Activated CD4-positive, alpha-beta T cell treated with anti-CD3 and anti-CD28 coated beads for 36 hours (primary cell): ENCODE measurements at regions of chr15 and their contacts with region 1.

Region 1: DNA sequence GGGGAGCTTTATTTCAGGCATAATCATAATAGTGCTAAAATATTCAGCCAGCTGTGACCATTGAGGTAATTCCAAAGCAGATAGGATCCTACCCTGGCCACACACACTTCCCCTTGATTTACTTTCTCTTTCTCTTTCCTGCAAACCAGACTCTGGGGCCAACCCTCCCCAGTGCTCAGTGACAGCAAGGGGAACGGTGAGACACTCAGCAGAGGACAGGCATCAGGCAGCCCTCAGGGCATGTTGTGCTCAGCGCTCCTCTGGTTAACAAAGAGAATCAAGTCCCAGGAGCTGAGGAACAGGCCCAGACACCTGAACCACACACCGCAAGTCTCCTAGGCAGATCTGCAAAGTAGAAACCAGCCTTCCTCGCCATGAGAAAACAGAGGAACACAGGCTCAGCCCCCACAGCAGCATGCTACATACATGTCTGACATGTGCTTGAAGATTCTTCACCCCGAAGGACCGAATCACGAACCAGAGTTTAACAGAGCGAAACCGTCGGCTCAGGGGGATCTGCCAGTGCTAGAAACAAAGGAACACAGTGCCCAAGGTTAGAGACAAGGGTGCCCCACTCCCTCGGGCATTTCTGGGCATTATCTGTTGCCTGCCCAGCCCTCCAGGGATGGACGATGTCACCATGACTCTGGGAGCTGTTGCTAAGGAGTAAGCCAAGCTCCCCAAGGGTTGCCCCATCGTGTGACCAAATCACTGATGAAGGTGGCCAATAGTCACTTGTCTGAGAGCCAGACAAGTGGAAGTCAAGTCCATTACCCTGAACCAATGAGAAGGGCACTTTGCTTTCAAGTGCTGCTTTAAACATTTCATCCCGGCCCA is 17.5 kb downstream of the HDC start:
- DNase-seq: peak; percentile 83
- ATAC-seq: peak; percentile 99
- H3K4me3 Mint-ChIP-seq: peak overlapping the region; percentile 67
- H3K27ac Mint-ChIP-seq: peak overlapping the region; percentile 96
- H3K4me1 Mint-ChIP-seq: peaks cover 33% of the 10 kb centered on the region
- H3K27me3 Mint-ChIP-seq: no peaks in the 10 kb centered on the region

Region 2: DNA sequence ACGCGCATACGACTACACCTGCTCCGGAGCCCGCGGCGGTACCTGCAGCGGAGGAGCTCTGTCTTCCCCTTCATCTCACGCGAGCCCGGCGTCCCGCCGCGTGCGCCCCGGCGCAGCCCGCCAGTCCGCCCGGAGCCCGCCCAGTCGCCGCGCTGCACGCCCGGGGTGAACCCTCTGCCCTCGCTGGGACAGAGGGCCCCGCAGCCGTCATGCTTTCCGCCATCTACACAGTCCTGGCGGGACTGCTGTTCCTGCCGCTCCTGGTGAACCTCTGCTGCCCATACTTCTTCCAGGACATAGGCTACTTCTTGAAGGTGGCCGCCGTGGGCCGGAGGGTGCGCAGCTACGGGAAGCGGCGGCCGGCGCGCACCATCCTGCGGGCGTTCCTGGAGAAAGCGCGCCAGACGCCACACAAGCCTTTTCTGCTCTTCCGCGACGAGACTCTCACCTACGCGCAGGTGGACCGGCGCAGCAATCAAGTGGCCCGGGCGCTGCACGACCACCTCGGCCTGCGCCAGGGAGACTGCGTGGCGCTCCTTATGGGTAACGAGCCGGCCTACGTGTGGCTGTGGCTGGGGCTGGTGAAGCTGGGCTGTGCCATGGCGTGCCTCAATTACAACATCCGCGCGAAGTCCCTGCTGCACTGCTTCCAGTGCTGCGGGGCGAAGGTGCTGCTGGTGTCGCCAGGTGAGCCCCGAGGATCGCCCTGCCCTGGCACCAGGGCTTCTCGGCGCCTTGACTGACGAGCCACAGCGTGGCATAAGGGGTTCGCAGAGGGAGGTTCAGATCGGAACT is 65.6 kb before region 1 on chr15:
- CTCF ChIA-PET with region 1: interaction called, 9 read pairs
- POLR2A ChIA-PET with region 1: interaction called, 5 read pairs
- intact Hi-C with region 1: loop called in 1 of 2 experiments (anchors 5 kb)
- DNase-seq: peak; percentile 73
- ATAC-seq: peak; percentile 68
- H3K4me3 Mint-ChIP-seq: peak overlapping the region; percentile 85
- H3K27ac Mint-ChIP-seq: peak overlapping the region; percentile 88
- H3K4me1 Mint-ChIP-seq: peaks cover 21% of the 10 kb centered on the region
- H3K27me3 Mint-ChIP-seq: peaks cover 27% of the 10 kb centered on the region

Region 3: GRCh38 chr15:50210291-50211062 is 37.6 kb before region 1 on chr15:
- CTCF ChIA-PET with region 1: no interaction called
- POLR2A ChIA-PET with region 1: no interaction called
- intact Hi-C with region 1: no loop called
- DNase-seq: no peak
- ATAC-seq: no peak
- H3K4me3 Mint-ChIP-seq: no peak overlapping the region
- H3K27ac Mint-ChIP-seq: no peak overlapping the region
- H3K4me1 Mint-ChIP-seq: no peaks in the 10 kb centered on the region
- H3K27me3 Mint-ChIP-seq: peaks cover 8% of the 10 kb centered on the region

Region 4: DNA sequence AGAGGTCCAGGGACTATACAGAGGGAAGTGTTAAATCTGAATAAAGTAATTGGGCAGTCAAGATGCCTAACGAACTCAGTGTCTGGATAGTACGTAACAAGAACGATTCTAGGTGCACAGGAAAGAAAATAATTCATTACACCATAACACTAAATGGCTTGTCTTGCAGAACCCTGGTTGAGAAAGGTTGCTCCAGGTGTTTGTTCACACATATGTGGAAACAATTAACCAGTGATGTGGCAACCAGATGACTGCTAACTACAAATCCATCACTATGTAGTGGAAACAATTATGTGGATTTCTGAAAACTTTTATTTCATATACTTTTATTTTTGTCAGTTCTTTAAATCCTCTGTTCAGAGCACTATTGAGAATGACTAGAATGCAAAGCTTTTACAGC is 27.9 kb after region 1 on chr15:
- CTCF ChIA-PET with region 1: no interaction called
- POLR2A ChIA-PET with region 1: no interaction called
- intact Hi-C with region 1: loop called in 1 of 2 experiments (anchors 2 kb)
- DNase-seq: no peak
- ATAC-seq: peak; percentile 65
- H3K4me3 Mint-ChIP-seq: no peak overlapping the region
- H3K27ac Mint-ChIP-seq: peak overlapping the region; percentile 41
- H3K4me1 Mint-ChIP-seq: peaks cover 23% of the 10 kb centered on the region
- H3K27me3 Mint-ChIP-seq: no peaks in the 10 kb centered on the region

Region 5: DNA sequence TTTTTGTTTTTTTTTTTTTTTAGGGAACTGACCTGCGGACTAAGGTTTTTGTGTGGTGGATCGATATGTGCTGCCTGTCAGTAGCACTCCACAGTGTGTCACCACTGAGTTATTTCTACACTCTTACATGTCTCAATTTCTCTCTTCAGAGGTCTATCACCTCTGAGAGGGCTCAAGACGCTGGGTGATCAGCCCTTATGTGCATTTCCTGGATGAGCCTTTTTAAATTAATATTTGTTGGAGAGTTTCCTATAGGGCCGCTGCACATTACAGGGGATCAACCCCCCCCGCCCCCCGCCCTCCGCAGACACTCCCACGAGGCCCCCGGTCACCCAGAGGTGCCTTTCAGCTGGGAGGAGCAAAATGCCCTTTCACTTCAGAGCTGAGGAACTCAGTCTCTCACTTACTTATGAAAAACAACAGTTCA is 625.9 kb after region 1 on chr15:
- CTCF ChIA-PET with region 1: no interaction called
- POLR2A ChIA-PET with region 1: no interaction called
- intact Hi-C with region 1: no loop called
- DNase-seq: no peak
- ATAC-seq: peak; percentile 57
- H3K4me3 Mint-ChIP-seq: no peak overlapping the region
- H3K27ac Mint-ChIP-seq: no peak overlapping the region
- H3K4me1 Mint-ChIP-seq: peaks cover 25% of the 10 kb centered on the region
- H3K27me3 Mint-ChIP-seq: peaks cover 12% of the 10 kb centered on the region

Region 6: GRCh38 chr15:51341366-51342226 is 1093.6 kb after region 1 on chr15 and contains the start of gene GLDN:
- CTCF ChIA-PET with region 1: no interaction called
- POLR2A ChIA-PET with region 1: no interaction called
- intact Hi-C with region 1: no loop called
- DNase-seq: no peak
- ATAC-seq: no peak
- H3K4me3 Mint-ChIP-seq: no peak within 1 kb of the TSS
- H3K27ac Mint-ChIP-seq: no peak within 1 kb of the TSS
- H3K4me1 Mint-ChIP-seq: no peaks in the 10 kb centered on the region
- H3K27me3 Mint-ChIP-seq: peaks cover 10% of the 10 kb centered on the region
- total RNA-seq, gene GLDN: not detected